Left ventricle myocardium inferior (tissue), 1 donor: ENCODE measurements at regions of chr16 and their contacts with region 1.

Region 1: GRCh38 chr16:84726079-84726668 is 26.4 kb downstream of the USP10 start:
- DNase-seq: peak; percentile 92
- H3K4me3 ChIP-seq: peak overlapping the region; percentile 31
- H3K27ac ChIP-seq: peak overlapping the region; percentile 39
- H3K4me1 ChIP-seq: peaks cover 83% of the 10 kb centered on the region
- H3K27me3 ChIP-seq: no peaks in the 10 kb centered on the region
- CTCF ChIP-seq: peak; percentile 96

Region 2: DNA sequence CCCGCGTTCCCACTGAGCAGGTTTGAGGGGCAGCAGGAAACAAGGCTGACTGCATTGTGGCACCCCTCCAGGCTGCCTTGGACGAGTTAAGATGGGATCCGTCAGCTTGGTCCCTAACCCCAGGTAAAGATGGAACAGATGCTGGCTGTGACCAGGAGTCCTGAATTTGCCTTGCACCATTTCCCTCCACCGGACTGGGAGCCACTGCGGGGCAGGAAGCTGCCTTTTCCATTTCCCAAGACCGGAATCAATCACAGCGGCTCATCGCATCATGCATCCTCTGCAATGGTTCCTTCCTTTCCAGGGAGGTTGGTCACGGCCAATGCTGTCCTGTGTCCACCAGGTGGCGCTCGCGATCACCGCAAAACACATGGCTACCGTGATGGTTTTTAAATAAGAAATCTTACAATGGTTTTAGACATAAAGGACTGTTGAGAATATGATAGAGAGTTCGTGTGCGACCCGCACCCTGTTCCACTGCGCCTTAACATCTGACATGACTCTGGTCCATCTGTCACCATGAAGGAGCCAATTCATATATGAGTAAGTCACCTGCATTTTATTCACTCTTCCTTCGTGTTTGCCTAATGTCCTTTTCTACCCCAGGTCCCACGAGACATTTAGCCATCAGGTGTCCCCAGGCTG is 214.9 kb before region 1 on chr16:
- intact Hi-C with region 1: loop called (anchors 5 kb)
- DNase-seq: peak; percentile 82
- H3K4me3 ChIP-seq: no peak overlapping the region
- H3K27ac ChIP-seq: no peak overlapping the region
- H3K4me1 ChIP-seq: peaks cover 4% of the 10 kb centered on the region
- H3K27me3 ChIP-seq: no peaks in the 10 kb centered on the region
- CTCF ChIP-seq: peak; percentile 98

Region 3: GRCh38 chr16:84660973-84661372 is 65.2 kb before region 1 on chr16:
- intact Hi-C with region 1: no loop called
- DNase-seq: no peak
- H3K4me3 ChIP-seq: no peak overlapping the region
- H3K27ac ChIP-seq: no peak overlapping the region
- H3K4me1 ChIP-seq: peaks cover 10% of the 10 kb centered on the region
- H3K27me3 ChIP-seq: no peaks in the 10 kb centered on the region
- CTCF ChIP-seq: no peak

Region 4: DNA sequence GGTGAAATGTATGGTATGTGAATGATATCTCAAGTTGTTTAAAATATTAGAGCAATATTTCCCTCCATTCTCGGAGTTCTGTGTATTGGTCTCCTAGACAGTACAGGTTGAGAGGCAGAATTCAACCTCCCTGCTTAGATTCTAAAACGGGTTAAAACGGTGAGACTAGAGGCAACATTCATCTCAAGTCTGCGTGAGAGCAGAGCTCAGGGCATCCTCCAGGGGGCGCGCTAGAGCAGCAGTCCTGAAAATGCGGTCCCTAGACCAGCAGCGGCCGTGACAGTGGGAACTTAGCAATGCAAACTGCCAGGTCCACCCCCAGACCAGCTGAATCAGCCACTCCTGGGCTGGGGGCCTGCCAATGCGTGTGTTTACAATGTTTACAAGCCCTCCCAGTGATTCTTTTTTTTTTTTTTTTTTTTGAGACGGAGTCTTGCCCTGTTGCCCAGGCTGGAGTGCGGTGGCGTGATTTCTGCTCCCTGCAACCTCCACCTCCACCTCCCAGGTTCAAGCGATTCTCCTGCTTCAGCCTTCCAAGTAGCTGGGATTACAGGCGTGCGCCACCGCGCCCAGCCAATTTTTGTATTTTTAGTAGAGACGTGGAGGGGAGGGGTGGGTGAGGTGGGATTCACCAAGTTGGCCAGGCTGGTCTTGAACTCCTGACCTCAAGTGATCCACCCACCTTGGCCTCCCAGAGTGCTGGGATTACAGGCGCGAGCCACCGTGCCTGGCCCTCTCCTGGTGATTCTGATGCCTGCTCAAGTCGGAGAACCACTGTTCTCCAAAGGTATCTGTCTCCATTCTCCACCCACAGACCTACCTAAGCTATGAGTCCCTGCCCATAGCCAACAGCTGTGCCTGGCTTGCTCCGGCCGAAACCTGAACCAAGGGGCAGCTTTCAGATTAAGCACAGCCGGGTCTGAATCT is 53.6 kb before region 1 on chr16:
- intact Hi-C with region 1: loop called (anchors 5 kb)
- DNase-seq: peak; percentile 76
- H3K4me3 ChIP-seq: no peak overlapping the region
- H3K27ac ChIP-seq: no peak overlapping the region
- H3K4me1 ChIP-seq: peaks cover 8% of the 10 kb centered on the region
- H3K27me3 ChIP-seq: peaks cover 2% of the 10 kb centered on the region
- CTCF ChIP-seq: peak; percentile 94